ENCODE measurements at regions of chr9 and their contacts with region 1.

Region 1: GRCh38 chr9:14156046-14156445 is 157.9 kb downstream of the NFIB start:
- DNase-seq: no peak
- ATAC-seq: no peak

Region 2: DNA sequence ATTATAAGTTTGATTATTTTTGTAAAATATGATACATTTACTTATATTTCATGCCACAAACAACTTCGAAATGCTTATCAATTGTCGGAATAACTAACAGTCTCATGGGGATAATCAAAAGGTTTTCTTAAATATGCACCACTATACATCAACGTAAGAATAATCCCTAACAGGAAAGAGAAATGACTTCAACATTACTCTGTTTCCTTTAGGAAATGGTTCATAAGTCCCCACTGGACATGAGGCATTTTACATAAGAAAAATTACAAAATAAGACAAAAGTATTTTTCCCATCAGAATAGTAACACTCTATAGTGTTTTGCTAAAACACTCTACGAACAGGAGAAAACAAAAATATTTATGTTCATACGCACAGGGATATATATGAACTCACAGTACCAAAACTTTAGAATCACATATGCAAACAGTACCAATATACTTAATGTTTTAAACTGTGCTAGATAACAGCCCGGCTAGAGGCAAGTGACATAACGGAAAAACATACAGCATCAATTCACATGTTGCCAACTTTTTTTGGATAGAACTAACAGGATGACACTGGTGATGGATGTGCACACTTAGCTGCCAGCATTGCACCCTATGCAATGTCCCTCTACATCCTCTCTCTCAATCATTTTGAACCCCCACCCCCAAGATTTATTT is 37.4 kb after region 1 on chr9:
- intact Hi-C with region 1: loop called (anchors 5 kb)
- DNase-seq: no peak
- ATAC-seq: no peak

Region 3: DNA sequence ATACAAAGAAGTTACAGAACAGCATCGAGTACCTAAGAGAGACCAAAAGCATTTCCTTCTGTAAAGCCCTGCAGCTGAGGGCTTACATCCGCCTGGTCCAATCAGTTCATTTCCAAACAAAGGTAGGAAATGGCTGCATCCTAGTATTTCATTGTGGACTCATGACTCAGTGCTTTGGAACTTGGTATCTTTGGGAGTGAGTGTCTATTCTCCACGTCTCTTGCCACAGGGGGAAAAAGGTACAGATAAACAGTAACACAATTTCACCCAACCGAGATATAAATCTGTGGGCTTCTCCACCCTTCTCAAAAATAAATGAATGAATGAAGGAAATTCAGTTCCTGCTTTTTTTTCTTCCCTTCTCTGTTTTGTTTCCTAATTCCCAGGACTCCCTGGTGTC is 82.5 kb after region 1 on chr9:
- intact Hi-C with region 1: no loop called
- DNase-seq: no peak
- ATAC-seq: peak; percentile 42

Region 4: DNA sequence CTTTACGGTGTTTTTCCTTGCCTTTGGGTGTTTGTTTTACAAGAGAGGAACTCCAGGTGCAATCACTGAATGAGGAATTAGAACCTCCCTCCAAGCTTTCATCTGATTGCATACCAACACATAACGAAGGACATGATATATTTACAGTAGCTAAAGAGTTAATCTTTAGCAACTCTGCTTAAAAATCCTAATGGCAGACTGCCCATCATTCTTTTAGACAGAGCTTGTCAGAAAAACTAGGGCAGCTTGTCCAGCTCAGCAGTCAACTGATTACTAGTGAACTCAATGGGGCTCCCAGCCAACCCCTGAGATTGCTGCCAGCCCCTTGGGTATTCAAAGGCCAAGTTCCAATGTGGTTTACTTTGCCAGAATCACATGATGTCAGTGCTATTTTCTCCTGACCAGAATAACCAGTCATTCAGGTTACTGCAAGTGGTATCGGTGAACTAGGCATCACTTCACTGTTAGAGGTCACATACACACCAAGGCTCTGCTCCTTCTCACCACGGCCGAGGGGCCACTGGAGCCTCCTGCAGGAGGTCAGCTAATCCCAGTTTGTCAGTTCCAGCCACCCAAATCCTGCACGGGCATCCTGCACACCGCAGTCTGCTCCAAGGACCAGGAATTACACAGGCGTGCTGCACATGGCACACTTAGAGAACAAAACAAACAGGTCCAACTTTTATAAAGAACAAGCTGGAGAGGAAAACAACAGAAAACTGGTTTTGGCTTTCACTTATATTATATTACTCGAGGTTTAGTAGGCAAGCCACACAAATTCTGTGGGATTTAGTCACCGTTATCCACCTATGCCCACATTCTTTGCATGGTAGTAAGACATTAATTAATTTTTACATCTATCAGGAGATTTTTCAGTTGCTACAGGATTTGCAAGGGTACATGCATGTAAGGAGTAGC is 95.4 kb after region 1 on chr9:
- intact Hi-C with region 1: no loop called
- DNase-seq: peak; percentile 88
- ATAC-seq: peak; percentile 95

Region 5: GRCh38 chr9:15142878-15143534 is 987.0 kb after region 1 on chr9:
- intact Hi-C with region 1: no loop called
- DNase-seq: no peak
- ATAC-seq: peak; percentile 79

Measured in Right ventricle myocardium superior (tissue), 1 donor.